Caco-2 (cell line): ENCODE measurements at regions of chr7 and their contacts with region 1.

Region 1: GRCh38 chr7:49852619-49853462 is 79.4 kb downstream of the VWC2 start:
- DNase-seq: peak; percentile 49 to 59
- H3K4me3 ChIP-seq: no peak overlapping the region
- H3K4me3 Mint-ChIP-seq: no peak overlapping the region
- H3K27ac Mint-ChIP-seq: no peak overlapping the region
- H3K4me1 ChIP-seq: no peaks in the 10 kb centered on the region
- H3K4me1 Mint-ChIP-seq: no peaks in the 10 kb centered on the region
- H3K27me3 ChIP-seq: no peaks in the 10 kb centered on the region
- H3K27me3 Mint-ChIP-seq: peaks cover 5% of the 10 kb centered on the region
- CTCF ChIP-seq: peak; percentile 74 to 85

Region 2: GRCh38 chr7:48424731-48425130 is 1428.1 kb before region 1 on chr7:
- CTCF ChIA-PET with region 1: no interaction called
- POLR2A ChIA-PET with region 1: no interaction called
- intact Hi-C with region 1: loop called (anchors 10 kb)
- DNase-seq: peak in 1 of 2 experiments; percentile 39
- H3K4me3 ChIP-seq: no peak overlapping the region
- H3K4me3 Mint-ChIP-seq: no peak overlapping the region
- H3K27ac Mint-ChIP-seq: no peak overlapping the region
- H3K4me1 ChIP-seq: no peaks in the 10 kb centered on the region
- H3K4me1 Mint-ChIP-seq: peaks cover 9% of the 10 kb centered on the region
- H3K27me3 ChIP-seq: no peaks in the 10 kb centered on the region
- H3K27me3 Mint-ChIP-seq: peaks cover 6% of the 10 kb centered on the region
- CTCF ChIP-seq: peak; percentile 60 to 71

Region 3: DNA sequence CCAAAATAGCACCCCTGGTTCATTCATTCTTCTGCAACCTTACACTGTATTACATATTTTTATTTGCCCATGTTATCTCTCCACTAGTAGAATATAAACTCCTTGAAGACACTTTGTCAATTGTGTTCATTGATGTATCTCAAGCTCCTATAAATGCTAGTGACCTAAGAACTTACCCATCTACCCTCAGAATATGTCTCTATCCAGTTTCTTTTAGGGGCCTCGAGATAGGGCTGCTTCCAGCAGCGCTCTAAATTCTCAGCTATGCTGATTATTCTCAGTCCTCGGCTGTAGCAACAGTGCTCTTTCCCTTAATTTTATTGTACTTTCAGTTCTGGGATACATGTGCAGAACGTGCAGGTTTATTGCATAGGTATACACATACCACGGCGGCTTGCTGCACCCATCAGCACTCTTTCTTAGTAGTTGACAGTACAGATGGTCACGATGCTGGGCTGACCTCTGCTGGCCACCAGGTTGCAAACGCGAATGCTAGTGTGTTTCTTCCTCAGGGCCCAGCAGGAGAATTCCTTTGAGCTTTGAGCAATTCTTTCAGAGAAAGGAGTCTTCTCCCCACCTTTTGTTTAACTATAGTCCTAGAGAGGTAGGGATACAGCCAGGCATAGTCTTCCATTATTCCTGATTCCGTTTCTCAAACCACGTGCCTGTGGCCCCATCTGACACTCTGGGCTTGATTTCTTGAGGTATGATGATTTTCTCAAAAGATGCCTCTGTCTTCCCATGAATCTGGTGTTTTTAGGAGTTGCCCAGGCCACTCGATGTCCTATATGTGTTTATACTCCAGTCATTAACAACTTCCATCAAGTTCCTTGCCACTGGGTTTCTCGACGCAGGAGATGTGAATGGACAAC is 977.6 kb before region 1 on chr7:
- CTCF ChIA-PET with region 1: no interaction called
- POLR2A ChIA-PET with region 1: no interaction called
- intact Hi-C with region 1: loop called (anchors 5 kb)
- DNase-seq: peak; percentile 59 to 66
- H3K4me3 ChIP-seq: no peak overlapping the region
- H3K4me3 Mint-ChIP-seq: no peak overlapping the region
- H3K27ac Mint-ChIP-seq: no peak overlapping the region
- H3K4me1 ChIP-seq: no peaks in the 10 kb centered on the region
- H3K4me1 Mint-ChIP-seq: no peaks in the 10 kb centered on the region
- H3K27me3 ChIP-seq: no peaks in the 10 kb centered on the region
- H3K27me3 Mint-ChIP-seq: peaks cover 4% of the 10 kb centered on the region
- CTCF ChIP-seq: peak; percentile 67 to 84

Region 4: GRCh38 chr7:49099587-49100326 is 753.1 kb before region 1 on chr7:
- CTCF ChIA-PET with region 1: no interaction called
- POLR2A ChIA-PET with region 1: no interaction called
- intact Hi-C with region 1: loop called (anchors 1 kb)
- DNase-seq: no peak
- H3K4me3 ChIP-seq: no peak overlapping the region
- H3K4me3 Mint-ChIP-seq: no peak overlapping the region
- H3K27ac Mint-ChIP-seq: no peak overlapping the region
- H3K4me1 ChIP-seq: no peaks in the 10 kb centered on the region
- H3K4me1 Mint-ChIP-seq: no peaks in the 10 kb centered on the region
- H3K27me3 ChIP-seq: no peaks in the 10 kb centered on the region
- H3K27me3 Mint-ChIP-seq: peaks cover 5% of the 10 kb centered on the region
- CTCF ChIP-seq: peak in 1 of 2 experiments; percentile 20

Region 5: GRCh38 chr7:49791088-49791741 is 61.6 kb before region 1 on chr7:
- CTCF ChIA-PET with region 1: no interaction called
- POLR2A ChIA-PET with region 1: no interaction called
- intact Hi-C with region 1: loop called (anchors 2 kb)
- DNase-seq: peak in 1 of 2 experiments; percentile 38
- H3K4me3 ChIP-seq: no peak overlapping the region
- H3K4me3 Mint-ChIP-seq: no peak overlapping the region
- H3K27ac Mint-ChIP-seq: no peak overlapping the region
- H3K4me1 ChIP-seq: no peaks in the 10 kb centered on the region
- H3K4me1 Mint-ChIP-seq: no peaks in the 10 kb centered on the region
- H3K27me3 ChIP-seq: no peaks in the 10 kb centered on the region; the same call in 1 of the 2 replicates
- H3K27me3 Mint-ChIP-seq: peaks cover 9% of the 10 kb centered on the region
- CTCF ChIP-seq: peak; percentile 44 to 55